Activated CD4-positive, alpha-beta T cell treated with anti-CD3 and anti-CD28 coated beads, Interleukin-2, amount 10 ng/mL, durations not matched to agents 24 days and 14 days (primary cell): ENCODE measurements at regions of chr1 and their contacts with region 1.

Region 1: DNA sequence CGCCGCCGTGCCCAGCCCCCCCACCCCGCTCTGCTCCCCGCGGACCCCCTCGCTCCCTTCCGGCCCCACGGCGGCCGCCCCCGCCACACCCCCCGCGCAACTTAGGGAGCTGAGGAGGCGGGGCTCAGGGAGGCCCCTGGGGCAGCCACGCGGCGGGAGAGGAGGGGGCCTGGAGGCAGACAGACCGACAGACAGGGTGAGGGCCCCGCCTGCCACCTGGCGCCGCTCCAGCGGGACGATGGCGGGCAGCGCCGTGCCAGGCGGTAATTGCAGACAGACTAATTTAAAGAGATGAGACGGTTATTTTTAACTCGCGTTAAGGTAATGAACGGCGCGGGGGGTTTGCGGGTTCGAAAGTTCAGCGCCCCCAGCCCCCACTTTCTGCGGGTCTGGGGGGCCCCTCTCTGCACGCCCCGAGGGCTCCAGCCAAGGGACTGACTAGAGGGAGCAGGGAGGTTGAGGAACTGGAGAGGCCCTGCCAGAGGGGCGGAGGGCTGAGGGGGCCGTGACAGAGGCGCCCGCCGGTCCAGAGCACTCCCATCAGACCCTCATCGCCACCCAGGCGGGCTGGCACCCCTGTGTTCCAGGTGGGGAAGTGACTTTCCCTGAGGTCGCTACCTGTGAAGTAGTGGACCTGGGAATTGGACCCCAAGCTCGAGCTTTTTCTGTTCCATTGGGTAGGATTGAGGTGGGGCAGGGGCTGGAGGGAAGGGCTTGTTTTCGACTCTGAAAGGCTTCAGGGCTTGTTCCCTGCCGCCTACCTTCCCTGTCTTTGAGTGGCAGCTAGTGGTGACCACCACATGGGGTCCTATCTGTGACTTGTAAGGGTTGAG is 5.4 kb downstream of the FOXO6 start:
- DNase-seq: peak; percentile 72
- H3K4me3 Mint-ChIP-seq: peak overlapping the region; percentile 38
- H3K27ac Mint-ChIP-seq: no peak overlapping the region
- H3K4me1 Mint-ChIP-seq: no peaks in the 10 kb centered on the region
- H3K27me3 Mint-ChIP-seq: peaks cover 57% of the 10 kb centered on the region

Region 2: GRCh38 chr1:41381692-41382477 is 15.2 kb after region 1 on chr1:
- intact Hi-C with region 1: loop called (anchors 2 kb)
- DNase-seq: peak; percentile 70
- H3K4me3 Mint-ChIP-seq: peak overlapping the region; percentile 59
- H3K27ac Mint-ChIP-seq: peak overlapping the region; percentile 29
- H3K4me1 Mint-ChIP-seq: peaks cover 6% of the 10 kb centered on the region
- H3K27me3 Mint-ChIP-seq: peaks cover 56% of the 10 kb centered on the region